ENCODE measurements at regions of chr14 and their contacts with region 1.

Region 1: DNA sequence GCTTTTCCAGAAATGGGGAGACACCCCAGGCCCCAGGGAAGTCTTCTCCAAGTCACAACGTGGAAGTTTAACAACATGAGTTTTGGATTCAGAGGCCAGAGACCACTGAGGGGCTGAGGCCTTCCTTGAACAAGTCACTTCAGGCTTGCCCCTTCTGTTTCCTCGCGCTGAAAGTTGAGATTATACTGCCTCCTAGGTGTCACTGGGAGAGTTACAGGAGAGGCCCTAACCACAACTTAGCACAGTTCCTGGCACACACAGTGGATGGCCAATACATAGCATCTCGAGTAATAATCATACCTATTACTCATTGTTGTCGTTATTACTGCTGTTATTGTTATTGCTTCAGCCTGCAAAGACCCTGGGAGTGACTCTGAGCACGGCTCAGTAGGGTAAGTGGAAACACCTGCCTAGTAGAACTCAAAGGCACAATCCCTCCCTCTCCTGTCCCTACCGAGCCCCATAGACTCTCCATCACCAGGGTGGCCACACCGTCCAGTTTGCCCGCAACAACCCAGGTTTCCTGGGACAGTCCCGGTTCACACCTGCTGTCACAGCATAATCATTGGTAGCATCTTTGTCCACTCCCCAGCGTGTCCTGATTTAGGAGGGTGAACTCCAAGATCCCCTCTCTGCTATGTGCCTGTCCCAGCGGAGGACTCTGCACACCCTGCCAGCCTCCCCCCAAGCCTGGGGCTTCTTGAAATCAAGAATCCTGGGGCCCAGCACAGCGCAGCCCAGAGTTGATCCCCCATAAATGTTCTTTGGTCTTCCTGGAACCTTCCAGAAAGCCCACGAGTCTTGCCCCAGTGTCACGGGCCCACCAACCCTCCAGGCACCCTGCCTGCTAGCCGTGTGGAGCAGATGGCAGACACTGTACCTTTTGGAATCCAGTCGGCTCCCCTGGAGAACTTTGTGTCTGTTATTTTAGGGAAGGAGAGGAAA is 85.0 kb downstream of the SYNE3 start:
- DNase-seq: no peak

Region 2: DNA sequence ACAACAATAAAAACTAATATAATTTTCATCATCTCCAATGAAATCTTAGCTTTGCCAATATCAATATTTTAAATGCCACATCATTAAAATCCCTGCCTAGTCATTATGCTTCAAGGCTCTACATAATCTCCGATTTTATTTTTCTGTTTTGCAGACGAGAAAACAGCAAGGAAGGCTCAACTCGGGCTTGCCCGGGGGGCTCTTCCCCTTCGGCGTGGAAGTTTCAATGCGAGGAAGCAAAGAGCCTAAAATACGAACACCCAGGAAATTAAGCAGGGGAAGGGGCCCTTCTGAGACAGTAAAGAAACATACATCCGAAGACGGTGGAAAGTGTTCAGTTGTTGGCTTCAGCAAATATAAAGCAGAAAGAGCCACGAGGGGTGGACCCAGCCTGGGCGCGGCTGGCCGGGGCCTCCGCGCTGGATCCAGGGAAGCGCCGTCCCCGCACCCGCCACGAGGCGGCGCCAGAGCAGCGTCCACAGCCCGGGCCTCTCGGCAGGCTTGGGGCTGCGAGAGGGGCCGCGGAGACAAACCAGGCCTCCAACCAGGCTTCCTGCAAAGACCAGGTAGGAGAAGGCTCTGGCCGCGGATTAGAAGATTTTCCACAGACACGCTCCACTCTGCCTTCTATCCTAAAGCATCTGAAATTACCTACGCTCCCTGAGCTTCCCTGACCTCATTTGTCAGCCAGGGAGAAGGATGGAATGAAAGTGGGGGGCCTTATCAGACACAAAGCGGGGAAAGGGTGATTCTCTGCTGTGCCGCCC is 742.1 kb before region 1 on chr14:
- intact Hi-C with region 1: loop called (anchors 5 kb)
- DNase-seq: peak; percentile 80

Region 3: GRCh38 chr14:95117937-95118721 is 313.3 kb before region 1 on chr14:
- intact Hi-C with region 1: loop called (anchors 10 kb)
- DNase-seq: no peak

Measured in cardiac septum (tissue), 1 donor.